ENCODE measurements at regions of chr5 and their contacts with region 1.

Region 1: DNA sequence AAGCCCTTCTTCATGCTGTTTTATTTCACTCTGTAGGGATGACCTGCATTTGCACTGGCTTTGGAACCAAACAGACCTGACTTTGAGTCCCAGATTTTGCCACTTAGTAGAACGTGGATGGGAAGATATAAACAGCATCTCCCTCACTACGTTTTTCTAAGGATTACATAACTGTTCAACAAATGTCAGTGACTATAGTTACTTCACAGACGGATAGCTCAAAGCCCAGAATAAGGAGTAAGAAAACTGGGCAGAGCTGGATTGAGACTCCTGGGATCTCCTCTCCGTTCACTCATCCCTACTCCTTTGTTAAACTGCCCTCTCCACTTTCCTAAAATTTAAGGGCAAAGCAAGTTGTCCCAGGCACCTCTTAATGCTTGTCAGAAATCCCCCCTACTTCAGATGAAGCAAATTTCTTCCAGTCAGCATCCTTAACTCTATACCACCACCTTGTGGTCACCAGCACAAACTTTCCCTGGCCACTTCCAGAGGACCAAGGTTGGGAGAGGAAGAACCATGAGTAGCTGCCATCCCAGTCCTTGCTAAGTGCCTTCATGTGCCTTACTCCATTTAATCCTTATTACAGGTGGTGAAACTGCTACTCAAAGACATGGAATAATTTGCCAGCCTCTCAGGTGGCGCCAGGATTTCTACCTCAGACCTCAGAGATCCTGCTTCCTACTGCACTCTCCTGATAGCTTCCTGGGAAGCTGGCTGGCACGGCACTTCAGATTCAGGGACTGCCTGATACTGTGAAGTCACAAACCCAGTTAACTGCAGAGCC is 38.4 kb downstream of the EGR1 start:
- DNase-seq: peak in 4 of 5 donors; percentile 27 to 52 (median 40)
- H3K4me3 ChIP-seq: no peak overlapping the region
- H3K27ac ChIP-seq: peak overlapping the region in 1 of 2 donors; percentile 26
- H3K4me1 ChIP-seq: no peaks in the 10 kb centered on the region
- H3K27me3 ChIP-seq: no peaks in the 10 kb centered on the region
- CTCF ChIP-seq: peak in 2 of 3 donors; percentile 81 to 88
- EP300 ChIP-seq: no peak
- POLR2A ChIP-seq: no peak

Region 2: DNA sequence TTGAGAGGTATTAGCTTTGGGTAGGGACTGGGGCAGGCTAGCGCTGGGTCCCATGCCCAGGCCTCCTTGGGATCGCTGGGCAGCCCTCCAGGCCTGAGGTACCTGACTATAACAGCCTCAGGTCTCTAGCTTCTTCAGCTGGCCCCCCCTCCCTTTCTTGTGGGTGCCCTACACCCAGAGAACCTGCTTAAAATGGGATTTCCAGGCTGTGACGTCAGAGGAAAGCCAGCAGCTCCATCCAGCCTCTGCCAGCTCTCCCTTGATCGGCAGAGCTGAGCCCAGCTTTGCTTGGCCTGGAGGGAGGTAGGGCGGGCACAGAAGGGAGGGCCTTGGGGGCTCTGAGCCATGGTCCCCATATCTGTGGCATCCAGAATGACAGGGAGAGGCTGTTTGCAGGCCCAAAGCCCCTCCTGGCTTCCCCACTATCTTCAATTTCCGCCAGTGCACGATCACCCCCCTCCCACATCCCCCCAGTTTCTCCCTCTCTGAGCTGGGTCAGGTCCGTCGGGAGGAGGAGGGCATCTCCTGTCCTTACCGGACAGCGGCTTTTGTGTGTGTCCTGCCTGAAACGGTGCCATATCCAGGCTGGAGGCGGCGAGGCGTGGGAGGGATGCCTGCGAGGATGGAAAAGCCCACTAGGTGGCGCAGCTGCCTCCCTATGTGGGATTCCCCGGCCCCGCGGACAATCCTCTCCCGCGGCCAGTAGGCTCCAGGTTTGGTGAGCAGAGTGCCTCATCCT is 54.0 kb before region 1 on chr5:
- intact Hi-C with region 1: loop called in 3 of 4 experiments (anchors 2 kb)
- DNase-seq: peak; percentile 87 to 94 (median 93)
- H3K4me3 ChIP-seq: no peak overlapping the region
- H3K27ac ChIP-seq: no peak overlapping the region
- H3K4me1 ChIP-seq: no peaks in the 10 kb centered on the region
- H3K27me3 ChIP-seq: no peaks in the 10 kb centered on the region
- CTCF ChIP-seq: peak; percentile 90 to 97 (median 96)
- EP300 ChIP-seq: no peak
- POLR2A ChIP-seq: no peak

Region 3: GRCh38 chr5:138464008-138464387 is 39.7 kb before region 1 on chr5:
- intact Hi-C with region 1: loop called in 1 of 4 experiments (anchors 5 kb)
- DNase-seq: peak; percentile 96 to 99 (median 98)
- H3K4me3 ChIP-seq: peak overlapping the region; percentile 50
- H3K27ac ChIP-seq: peak overlapping the region; percentile 93 to 95
- H3K4me1 ChIP-seq: peaks cover 19% of the 10 kb centered on the region
- H3K27me3 ChIP-seq: no peaks in the 10 kb centered on the region
- CTCF ChIP-seq: peak; percentile 97 to 98 (median 97)
- EP300 ChIP-seq: no peak
- POLR2A ChIP-seq: peak; percentile 82

Region 4: DNA sequence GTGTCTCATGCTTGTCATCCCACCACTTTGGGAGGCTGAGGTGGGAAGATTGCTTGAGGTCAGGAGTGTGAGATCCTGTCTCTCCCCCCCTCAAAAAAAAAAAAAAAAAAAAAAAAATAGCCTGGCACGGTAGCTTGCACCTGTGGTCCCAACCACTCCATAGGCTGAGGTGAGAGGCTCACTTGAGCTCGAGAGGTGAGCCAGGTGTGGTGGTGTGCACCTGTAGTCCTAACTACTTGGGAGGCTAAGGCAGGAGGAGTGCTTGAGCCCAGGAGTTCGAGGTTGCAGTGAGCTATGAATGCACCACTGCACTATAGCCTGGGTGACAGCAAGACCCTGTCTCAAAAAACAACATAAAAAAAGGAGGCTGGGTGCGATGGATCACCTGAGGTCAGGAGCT is 49.0 kb after region 1 on chr5:
- intact Hi-C with region 1: no loop called
- DNase-seq: no peak
- H3K4me3 ChIP-seq: no peak overlapping the region
- H3K27ac ChIP-seq: no peak overlapping the region
- H3K4me1 ChIP-seq: peaks cover 2% of the 10 kb centered on the region
- H3K27me3 ChIP-seq: no peaks in the 10 kb centered on the region
- CTCF ChIP-seq: no peak
- EP300 ChIP-seq: no peak
- POLR2A ChIP-seq: no peak